A549 (cell line): ENCODE measurements at regions of chrX and their contacts with region 1.

Region 1: DNA sequence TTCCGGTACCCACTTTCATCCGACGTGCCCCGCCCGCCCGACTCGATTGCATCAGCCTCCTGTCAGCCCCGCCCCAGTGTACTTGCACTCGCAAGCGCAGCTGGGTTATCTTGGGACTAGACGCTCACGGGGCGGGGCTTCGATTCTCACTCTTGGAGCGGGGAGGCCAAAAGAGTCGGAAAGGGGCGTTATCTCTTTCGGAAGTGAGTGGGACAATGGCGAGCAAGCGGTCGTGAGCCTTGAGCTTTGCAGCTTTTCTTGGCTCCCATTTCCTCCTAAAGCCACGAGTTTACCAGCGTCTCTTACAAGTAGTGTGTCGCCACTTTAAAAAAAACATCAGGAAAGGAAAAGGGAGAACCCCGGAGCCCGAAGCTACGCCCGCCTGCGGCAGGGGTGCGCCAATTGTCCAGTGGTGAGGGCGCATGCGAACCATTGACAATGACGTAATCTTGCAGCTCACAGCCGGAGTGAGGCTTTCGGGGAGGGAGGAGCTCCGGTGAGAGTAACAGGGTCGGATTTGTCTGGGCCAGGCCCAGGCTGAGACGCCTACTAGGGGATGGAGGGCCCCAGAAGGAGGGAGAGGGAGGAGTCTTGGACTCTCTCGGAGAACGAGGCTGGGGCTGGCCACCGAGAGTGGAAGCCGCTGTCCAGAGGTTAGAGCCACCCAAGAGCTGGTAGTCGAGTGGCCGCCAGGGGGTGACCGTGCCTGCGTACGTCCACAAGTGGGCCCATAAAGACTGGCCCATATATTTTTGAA is 109.5 kb downstream of the GNL3L start:
- DNase-seq: peak; percentile 90 to 98
- ATAC-seq: peak; percentile 99 to 100
- H3K4me3 ChIP-seq: peak overlapping the region; percentile 53
- H3K27ac ChIP-seq: peak overlapping the region; percentile 92 to 96
- H3K4me1 ChIP-seq: no peaks in the 10 kb centered on the region; the same call in 2 of the 3 replicates
- CTCF ChIP-seq: peak; percentile 67
- EP300 ChIP-seq: no peak
- POLR2A ChIP-seq: peak; percentile 51
- RAD21 ChIP-seq: peak; percentile 68 to 71

Region 2: GRCh38 chrX:54430519-54430918 is 209.0 kb before region 1 on chrX:
- CTCF ChIA-PET with region 1: no interaction called
- POLR2A ChIA-PET with region 1: no interaction called
- DNase-seq: no peak
- ATAC-seq: no peak
- H3K4me3 ChIP-seq: no peak overlapping the region
- H3K27ac ChIP-seq: no peak overlapping the region
- H3K4me1 ChIP-seq: no peaks in the 10 kb centered on the region
- CTCF ChIP-seq: no peak
- EP300 ChIP-seq: no peak
- POLR2A ChIP-seq: no peak
- RAD21 ChIP-seq: no peak

Region 3: DNA sequence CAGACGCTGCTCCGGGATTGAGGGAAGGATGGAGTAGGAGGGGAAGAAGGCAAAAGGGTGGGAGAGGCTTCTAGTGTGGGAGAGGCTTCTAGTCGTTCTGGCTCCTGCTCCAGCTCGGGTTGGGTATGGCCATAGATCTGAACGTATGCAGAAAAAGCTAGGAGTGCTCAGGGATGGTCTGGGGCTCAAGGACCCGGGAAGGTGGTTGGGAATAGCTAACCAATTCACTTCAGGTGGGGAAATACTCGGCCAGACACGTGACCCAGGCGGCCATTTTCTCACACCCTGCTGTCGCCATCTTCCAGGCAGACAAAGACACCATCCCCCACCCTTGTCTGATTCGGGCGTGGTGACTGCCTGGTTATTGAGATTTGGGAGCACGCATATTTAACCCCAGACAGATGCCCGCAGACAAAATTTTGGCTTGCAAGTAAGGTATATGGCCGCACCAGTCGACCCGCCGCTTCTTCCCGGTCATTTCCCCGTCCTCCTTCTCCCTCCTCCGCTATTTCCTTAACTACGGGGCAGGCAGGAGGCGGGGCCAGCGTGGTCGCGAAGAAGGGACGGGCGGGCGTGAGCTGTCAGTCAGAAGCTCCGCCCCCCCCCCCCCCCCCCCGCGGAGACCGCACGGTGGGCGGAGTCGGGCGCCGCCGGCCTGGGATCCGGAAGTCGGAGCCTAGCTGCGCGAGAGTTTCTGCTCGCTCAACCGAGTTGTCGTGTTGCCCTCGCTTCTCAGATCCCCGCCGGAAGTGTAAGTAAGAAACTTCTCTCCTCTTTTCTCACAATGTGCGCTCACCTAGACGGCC is 109.8 kb before region 1 on chrX and contains the start of gene GNL3L:
- CTCF ChIA-PET with region 1: interaction called, 3 read pairs
- POLR2A ChIA-PET with region 1: interaction called, 12 read pairs
- DNase-seq: peak; percentile 70 to 92
- ATAC-seq: peak; percentile 95 to 96
- H3K4me3 ChIP-seq: peak within 1 kb of the TSS; percentile 92
- H3K27ac ChIP-seq: peak within 1 kb of the TSS; percentile 96 to 99
- H3K4me1 ChIP-seq: peaks cover 19% of the 10 kb centered on the region; the same call in 2 of the 3 replicates
- CTCF ChIP-seq: no peak
- EP300 ChIP-seq: no peak
- POLR2A ChIP-seq: peak; percentile 61; the same call in 1 of the 2 replicates
- RAD21 ChIP-seq: no peak
- polyA plus RNA-seq, gene GNL3L: 51.0 and 51.9 TPM in 2 replicates

Region 4: DNA sequence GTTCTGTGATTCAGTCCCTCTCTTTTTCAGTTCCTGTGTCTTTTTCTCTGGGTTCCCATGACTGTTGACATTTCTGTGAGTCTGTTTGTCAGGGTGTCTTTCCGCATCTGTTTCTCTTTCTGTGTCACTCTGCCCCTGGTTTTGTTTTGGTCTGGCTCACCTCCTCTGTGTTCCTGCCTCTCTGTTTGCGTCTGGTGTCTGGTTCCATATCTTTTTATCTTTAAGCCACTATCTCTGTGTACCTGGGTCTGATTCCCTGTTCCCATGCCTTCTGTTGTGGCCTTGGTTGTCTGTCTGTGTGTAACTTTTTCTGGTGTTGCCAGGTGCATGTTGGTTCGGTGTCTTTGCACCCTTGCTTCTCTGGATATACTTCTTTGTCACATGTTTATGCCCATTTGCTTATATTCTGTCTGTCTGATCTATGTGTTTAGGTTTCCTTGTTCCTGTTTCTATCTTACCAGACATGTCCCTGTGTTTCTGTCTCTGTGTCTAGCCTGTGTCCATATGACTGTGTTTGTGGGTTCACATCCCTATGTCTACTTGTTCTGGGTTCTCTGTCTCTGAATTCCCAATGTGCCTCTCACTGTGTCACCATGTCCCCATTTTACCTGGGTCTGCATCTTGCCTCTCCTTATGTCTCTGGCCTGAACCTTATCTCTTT is 108.3 kb after region 1 on chrX:
- CTCF ChIA-PET with region 1: no interaction called
- POLR2A ChIA-PET with region 1: no interaction called
- DNase-seq: no peak
- ATAC-seq: no peak
- H3K4me3 ChIP-seq: no peak overlapping the region
- H3K27ac ChIP-seq: no peak overlapping the region
- H3K4me1 ChIP-seq: no peaks in the 10 kb centered on the region
- CTCF ChIP-seq: no peak
- EP300 ChIP-seq: no peak
- POLR2A ChIP-seq: no peak
- RAD21 ChIP-seq: no peak

Region 5: GRCh38 chrX:54808605-54809483 is 169.3 kb after region 1 on chrX:
- CTCF ChIA-PET with region 1: interaction called, 11 read pairs
- POLR2A ChIA-PET with region 1: interaction called, 20 read pairs
- DNase-seq: peak; percentile 89 to 97
- ATAC-seq: peak; percentile 82 to 90
- H3K4me3 ChIP-seq: peak overlapping the region; percentile 92
- H3K27ac ChIP-seq: peak overlapping the region; percentile 81 to 90
- H3K4me1 ChIP-seq: peaks cover 9% of the 10 kb centered on the region; the same call in 2 of the 3 replicates
- CTCF ChIP-seq: no peak
- EP300 ChIP-seq: no peak
- POLR2A ChIP-seq: no peak
- RAD21 ChIP-seq: no peak

Region 6: DNA sequence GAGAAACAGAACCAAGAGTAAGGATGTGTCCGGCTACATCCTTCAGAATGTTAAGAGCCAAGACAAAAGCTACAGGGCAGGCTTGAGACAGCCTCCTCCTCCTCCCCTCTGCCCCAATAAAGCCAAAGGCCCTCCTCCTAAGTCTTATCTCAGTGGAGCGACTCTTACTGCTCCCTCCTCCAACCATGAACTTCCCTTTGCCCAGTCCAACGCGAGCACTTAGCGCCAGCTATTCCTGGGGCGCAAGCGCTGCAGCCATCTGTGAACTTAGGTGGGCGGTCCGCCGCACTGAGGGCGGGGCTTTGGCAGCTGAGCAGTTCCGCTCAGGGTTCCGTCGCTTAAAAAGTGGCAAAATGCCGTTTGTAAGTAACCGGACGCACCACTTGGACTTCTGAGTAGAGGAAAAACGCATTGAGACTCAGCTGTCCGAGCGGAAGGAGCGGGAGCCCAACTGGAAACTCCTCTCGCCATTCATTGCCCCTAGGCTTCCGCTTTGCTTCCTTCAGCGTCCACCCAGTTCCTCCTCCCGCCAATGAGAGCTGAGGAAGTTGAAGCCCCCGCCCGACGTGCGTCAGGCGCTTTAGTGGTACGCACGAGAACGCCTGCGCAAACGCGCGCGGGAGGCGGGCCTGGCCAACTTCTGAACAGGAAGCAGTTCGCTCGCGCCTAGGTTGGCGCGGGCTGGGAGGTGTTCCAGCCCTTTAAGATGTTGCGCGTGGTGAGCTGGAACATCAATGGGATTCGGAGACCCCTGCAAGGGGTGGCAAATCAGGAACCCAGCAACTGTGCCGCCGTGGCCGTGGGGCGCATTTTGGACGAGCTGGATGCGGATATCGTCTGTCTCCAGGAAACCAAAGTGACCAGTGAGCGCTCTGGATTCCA is 360.4 kb after region 1 on chrX and contains the start of gene APEX2:
- CTCF ChIA-PET with region 1: interaction called, 17 read pairs
- POLR2A ChIA-PET with region 1: interaction called, 36 read pairs
- DNase-seq: peak; percentile 83 to 96
- ATAC-seq: peak; percentile 98 to 99
- H3K4me3 ChIP-seq: peak within 1 kb of the TSS; percentile 63
- H3K27ac ChIP-seq: peak within 1 kb of the TSS; percentile 82 to 96
- H3K4me1 ChIP-seq: peaks cover 5% of the 10 kb centered on the region; the same call in 2 of the 3 replicates
- CTCF ChIP-seq: no peak
- EP300 ChIP-seq: no peak
- POLR2A ChIP-seq: peak; percentile 89
- RAD21 ChIP-seq: no peak
- polyA plus RNA-seq, gene APEX2: 37.3 and 37.8 TPM in 2 replicates

Region 7: DNA sequence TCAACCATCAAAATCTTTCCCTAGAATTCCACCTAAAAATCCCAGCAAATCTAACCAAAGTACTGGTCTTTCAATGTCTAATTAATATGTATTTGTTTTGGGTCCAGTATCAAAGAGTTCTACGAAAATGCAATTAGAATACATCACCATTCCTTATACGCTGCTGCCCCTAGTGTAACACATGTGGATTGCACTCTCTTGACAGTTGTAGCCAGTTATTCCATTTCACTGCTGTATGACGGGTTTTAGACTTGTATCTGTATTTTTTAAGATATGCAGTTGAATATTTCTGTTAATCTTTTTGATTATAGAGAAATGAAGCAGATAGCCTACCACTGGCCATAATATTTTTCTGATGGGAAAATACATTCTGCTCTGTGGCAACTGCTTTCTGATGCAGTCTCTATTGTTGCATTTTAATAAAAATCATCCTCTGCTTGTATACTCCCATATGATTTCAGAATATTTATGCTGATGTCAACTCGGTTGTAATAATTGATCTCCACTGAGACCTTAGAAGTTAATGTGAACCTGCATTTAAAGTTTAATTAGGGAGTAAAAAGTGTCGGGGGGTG is 418.2 kb after region 1 on chrX:
- CTCF ChIA-PET with region 1: interaction called, 13 read pairs
- POLR2A ChIA-PET with region 1: interaction called, 7 read pairs
- DNase-seq: peak; percentile 2 to 33
- ATAC-seq: peak; percentile 64 to 81; a peak in 5 of 6 replicates
- H3K4me3 ChIP-seq: no peak overlapping the region
- H3K27ac ChIP-seq: no peak overlapping the region
- H3K4me1 ChIP-seq: no peaks in the 10 kb centered on the region
- CTCF ChIP-seq: peak; percentile 67
- EP300 ChIP-seq: no peak
- POLR2A ChIP-seq: no peak
- RAD21 ChIP-seq: peak; percentile 77 to 83